Ascending aorta (tissue), 2 donors: ENCODE measurements at regions of chr20 and their contacts with region 1.

Region 1: GRCh38 chr20:44210422-44211176 is at the start of gene OSER1:
- DNase-seq: peak; percentile 97 to 99
- H3K4me3 ChIP-seq: peak within 1 kb of the TSS; percentile 55 to 78
- H3K27ac ChIP-seq: peak within 1 kb of the TSS; percentile 91 to 96
- H3K4me1 ChIP-seq: peaks cover 0 to 44% of the 10 kb centered on the region in 2 donors
- H3K27me3 ChIP-seq: no peaks in the 10 kb centered on the region
- CTCF ChIP-seq: peak in 1 of 3 experiments; percentile 8
- total RNA-seq, gene OSER1: 9.2 TPM

Region 2: GRCh38 chr20:43590392-43591323 is 619.9 kb before region 1 on chr20 and contains the start of gene IFT52:
- intact Hi-C with region 1: loop called (anchors 2 kb)
- DNase-seq: peak; percentile 81 to 95
- H3K4me3 ChIP-seq: peak within 1 kb of the TSS; percentile 87 to 93
- H3K27ac ChIP-seq: peak within 1 kb of the TSS; percentile 75 to 85
- H3K4me1 ChIP-seq: peaks cover 6 to 12% of the 10 kb centered on the region in 2 donors
- H3K27me3 ChIP-seq: no peaks in the 10 kb centered on the region
- CTCF ChIP-seq: no peak
- total RNA-seq, gene IFT52: 15.2 TPM

Region 3: DNA sequence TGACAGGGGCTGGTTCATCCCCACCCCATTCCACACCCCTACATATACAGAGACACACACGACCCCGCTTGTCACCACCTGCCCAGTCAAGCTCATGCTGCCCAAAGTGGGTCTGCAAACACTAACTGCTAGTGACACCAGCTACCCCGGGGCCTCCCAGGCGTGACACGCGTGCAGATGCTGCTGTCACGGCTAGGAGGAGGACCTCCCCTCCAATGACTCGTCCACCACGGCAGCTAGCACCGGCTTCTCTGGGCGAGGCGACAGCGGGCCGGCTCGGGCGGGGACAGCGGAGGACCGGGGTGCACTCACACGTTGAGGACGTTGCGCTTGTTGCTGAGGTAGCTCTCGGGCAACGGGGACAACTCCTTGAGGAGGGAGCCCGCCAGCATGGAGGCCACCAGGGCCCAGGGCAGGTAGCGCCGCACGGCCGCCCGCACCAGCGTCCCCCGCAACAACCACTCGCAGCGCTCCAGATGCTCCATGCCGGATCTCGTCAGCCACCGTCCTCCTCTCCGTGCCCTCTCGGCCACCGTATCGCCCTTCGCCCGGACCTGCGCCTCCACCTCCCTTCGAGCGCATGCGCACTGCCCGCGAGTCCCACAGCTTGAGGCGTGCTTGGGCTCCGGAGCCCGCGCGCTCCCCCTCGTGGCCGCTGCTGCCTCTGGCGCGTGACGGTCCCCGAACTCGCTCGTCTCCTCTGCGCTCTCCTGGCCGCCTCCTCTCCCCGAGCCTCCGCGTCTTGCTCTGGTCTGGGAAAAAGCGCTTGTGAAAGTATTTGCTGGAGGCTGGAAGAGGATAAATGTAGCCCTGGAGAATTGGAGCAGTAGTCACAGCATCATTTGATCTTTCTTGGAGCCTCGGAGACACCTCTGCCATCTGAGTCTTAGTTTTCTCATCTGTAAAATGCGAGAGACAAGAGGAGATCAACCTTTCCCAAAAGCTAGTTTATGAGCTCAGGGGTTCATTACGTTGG is 100.4 kb after region 1 on chr20 and contains the start of gene FITM2:
- intact Hi-C with region 1: loop called (anchors 1 kb)
- DNase-seq: peak; percentile 89 to 99
- H3K4me3 ChIP-seq: peak within 1 kb of the TSS; percentile 85 to 100
- H3K27ac ChIP-seq: peak within 1 kb of the TSS; percentile 50 to 68
- H3K4me1 ChIP-seq: peaks cover 4 to 9% of the 10 kb centered on the region in 2 donors
- H3K27me3 ChIP-seq: no peaks in the 10 kb centered on the region
- CTCF ChIP-seq: peak; percentile 87 to 98 (median 96)
- total RNA-seq, gene FITM2: 5.3 TPM

Region 4: GRCh38 chr20:44521484-44522481 is 311.2 kb after region 1 on chr20 and contains the start of gene SERINC3:
- intact Hi-C with region 1: loop called (anchors 1 kb)
- DNase-seq: peak; percentile 91 to 99
- H3K4me3 ChIP-seq: peak within 1 kb of the TSS; percentile 70 to 89
- H3K27ac ChIP-seq: peak within 1 kb of the TSS; percentile 94 to 99
- H3K4me1 ChIP-seq: peaks cover 9 to 35% of the 10 kb centered on the region in 2 donors
- H3K27me3 ChIP-seq: no peaks in the 10 kb centered on the region
- CTCF ChIP-seq: peak in 1 of 3 experiments; percentile 23
- total RNA-seq, gene SERINC3: 78.1 TPM

Region 5: DNA sequence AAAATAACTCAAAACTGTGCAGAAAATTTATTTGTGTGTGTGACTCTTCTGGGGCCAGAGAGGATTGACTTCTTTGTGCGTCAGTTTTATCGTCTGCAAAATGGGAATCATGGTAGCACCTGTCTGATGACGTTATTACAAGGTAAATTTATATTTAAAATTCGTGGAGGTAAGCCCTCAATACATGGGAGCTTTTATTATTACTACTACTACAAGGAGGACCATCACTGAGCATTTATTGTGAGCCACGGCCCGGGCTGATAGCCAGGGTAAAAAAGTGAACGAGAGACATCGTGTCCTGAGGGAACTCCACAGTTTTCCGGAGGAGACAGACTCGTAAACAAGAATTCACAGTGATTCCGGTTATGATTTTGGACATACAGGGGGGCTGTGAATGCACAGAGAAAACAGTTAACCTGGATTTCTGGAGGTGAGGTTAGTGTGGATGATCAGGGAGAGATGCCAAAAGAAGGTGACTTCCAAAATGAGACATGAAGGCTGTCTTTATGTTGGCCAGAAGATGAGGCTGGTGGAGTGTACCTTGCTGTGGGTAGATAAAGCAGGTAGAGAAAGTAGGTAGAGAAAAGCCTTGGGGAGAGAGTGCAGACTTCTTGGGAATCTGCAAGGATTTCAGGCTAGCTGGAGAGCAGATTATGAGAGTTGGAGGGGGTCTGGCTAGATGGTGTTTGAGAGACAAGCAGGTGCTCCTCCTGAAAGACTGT is 321.8 kb after region 1 on chr20:
- intact Hi-C with region 1: no loop called
- DNase-seq: no peak
- H3K4me3 ChIP-seq: peak overlapping the region; percentile 73 to 99
- H3K27ac ChIP-seq: peak overlapping the region; percentile 3 to 76
- H3K4me1 ChIP-seq: peaks cover 0 to 10% of the 10 kb centered on the region in 2 donors
- H3K27me3 ChIP-seq: no peaks in the 10 kb centered on the region
- CTCF ChIP-seq: no peak

Region 6: DNA sequence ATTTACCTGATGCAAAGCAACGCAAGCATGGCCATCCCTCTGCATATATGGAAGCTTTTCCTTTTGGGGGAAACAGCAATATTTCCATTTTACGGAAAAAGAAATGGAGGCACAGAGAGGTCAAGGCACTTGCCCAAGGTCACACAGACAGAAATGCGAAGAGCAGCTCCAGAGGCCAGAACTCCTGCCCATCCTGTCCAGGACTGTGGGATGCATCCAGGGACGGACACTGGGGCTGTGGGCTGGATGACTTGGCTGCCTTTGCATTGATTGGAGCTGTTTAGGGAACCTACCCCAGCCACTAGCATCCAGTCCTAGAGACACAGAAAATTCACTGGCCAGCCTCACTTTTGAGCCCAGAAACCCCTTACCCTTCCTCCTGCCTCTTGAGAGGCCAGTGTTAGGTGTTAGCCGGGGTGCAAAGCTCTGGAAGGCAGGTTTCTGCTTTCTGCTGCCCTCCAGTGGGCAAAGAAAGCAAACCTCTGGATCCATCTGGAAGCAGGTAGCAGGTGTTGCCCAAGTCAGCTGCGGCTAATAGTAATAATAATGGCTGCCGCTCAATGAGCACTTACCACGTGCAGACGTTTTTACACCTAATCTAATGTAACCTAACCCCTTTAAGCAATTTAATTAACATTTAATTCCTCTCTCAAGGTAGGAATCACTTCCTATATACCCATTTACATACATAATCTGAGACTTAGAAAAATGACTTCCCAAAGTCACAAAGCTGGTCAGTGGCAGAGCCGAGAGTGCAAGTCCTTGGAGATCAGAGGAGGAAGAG is 472.9 kb after region 1 on chr20:
- intact Hi-C with region 1: loop called (anchors 5 kb)
- DNase-seq: no peak
- H3K4me3 ChIP-seq: no peak overlapping the region
- H3K27ac ChIP-seq: no peak overlapping the region
- H3K4me1 ChIP-seq: peaks cover 0 to 5% of the 10 kb centered on the region in 2 donors
- H3K27me3 ChIP-seq: no peaks in the 10 kb centered on the region
- CTCF ChIP-seq: peak in 2 of 3 experiments; percentile 34 to 46

Region 7: DNA sequence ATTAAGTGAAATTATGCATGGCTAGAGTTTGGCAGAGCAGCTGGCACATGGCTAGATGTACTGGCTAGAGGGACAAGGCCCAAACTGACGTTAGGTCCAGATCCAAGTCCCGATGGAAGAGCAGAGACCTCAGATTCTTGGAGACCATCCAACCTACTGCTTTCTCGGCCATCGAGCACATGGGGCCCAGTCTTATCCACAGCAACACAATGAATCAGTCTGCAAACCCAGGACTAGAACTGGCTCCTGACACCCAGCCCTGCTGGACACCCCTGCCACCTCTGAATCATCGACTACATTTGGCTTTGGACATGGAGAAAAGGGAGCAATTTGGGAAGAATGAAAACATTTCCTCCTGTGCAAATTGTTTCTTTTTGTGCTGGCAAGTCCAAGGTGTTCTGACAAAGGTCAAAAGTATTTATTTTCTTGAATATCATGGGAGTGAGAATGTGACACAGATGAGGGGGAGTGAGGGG is 651.0 kb after region 1 on chr20:
- intact Hi-C with region 1: loop called (anchors 10 kb)
- DNase-seq: peak; percentile 78 to 96
- H3K4me3 ChIP-seq: no peak overlapping the region
- H3K27ac ChIP-seq: peak overlapping the region; percentile 91
- H3K4me1 ChIP-seq: peaks cover 19 to 49% of the 10 kb centered on the region in 2 donors
- H3K27me3 ChIP-seq: no peaks in the 10 kb centered on the region
- CTCF ChIP-seq: no peak

Region 8: GRCh38 chr20:45406259-45407066 is 1195.9 kb after region 1 on chr20:
- intact Hi-C with region 1: loop called (anchors 2 kb)
- DNase-seq: peak; percentile 38 to 90
- H3K4me3 ChIP-seq: peak overlapping the region; percentile 81 to 98
- H3K27ac ChIP-seq: peak overlapping the region; percentile 95 to 99
- H3K4me1 ChIP-seq: peaks cover 9 to 20% of the 10 kb centered on the region in 2 donors
- H3K27me3 ChIP-seq: no peaks in the 10 kb centered on the region
- CTCF ChIP-seq: no peak